Thyroid gland (tissue), 4 donors: ENCODE measurements at regions of chr17 and their contacts with region 1.

Region 1: DNA sequence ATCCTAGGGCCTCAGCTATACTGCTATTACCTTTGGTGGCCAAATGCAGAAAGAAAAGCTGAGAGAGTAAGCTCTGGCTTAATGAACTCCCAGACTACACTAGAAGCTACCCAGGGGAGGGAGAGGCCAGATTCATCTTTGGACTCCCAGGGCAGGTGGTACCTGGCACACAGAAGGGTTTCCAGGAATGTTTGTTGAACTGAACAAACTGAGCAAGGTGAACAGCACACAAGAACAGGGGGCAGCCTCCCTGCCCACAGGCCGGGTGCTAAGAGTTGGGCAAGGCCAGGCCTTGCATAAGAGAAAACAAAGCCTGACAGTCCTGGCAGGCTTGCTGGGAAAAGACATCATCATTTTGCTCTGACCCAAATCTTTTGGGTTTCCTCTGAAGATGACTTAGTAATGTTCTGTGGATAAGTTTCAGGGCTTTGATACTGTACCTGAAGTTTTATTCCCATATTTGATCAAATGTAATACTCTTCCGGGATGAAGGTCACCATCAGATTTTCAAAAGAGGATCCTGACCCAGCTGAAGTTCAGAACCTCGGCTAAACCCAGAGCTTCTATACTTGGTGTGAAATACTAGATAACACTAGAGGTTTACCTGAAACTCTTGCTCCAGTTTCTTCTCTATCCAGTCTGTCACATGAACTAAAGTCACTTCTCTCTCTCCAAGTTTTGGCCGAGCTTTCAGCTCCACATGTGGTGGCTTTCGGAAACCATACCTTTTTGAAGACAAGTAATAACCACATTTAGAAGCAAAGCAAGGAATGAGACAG is 20.5 kb upstream of the ERN1 start:
- DNase-seq: peak; percentile 58 to 63
- H3K4me3 ChIP-seq: no peak overlapping the region
- H3K27ac ChIP-seq: peak overlapping the region in 1 of 3 donors; percentile 29
- H3K4me1 ChIP-seq: peaks cover 13 to 16% of the 10 kb centered on the region in 2 donors
- H3K27me3 ChIP-seq: no peaks in the 10 kb centered on the region
- CTCF ChIP-seq: no peak
- POLR2A ChIP-seq: no peak

Region 2: GRCh38 chr17:64281962-64282727 is 131.7 kb after region 1 on chr17:
- intact Hi-C with region 1: loop called (anchors 5 kb)
- DNase-seq: peak; percentile 55 to 60
- H3K4me3 ChIP-seq: no peak overlapping the region
- H3K27ac ChIP-seq: no peak overlapping the region
- H3K4me1 ChIP-seq: no peaks in the 10 kb centered on the region
- H3K27me3 ChIP-seq: no peaks in the 10 kb centered on the region
- CTCF ChIP-seq: peak; percentile 68 to 90 (median 74)
- POLR2A ChIP-seq: no peak